ENCODE measurements at regions of chr16 and their contacts with region 1.

Region 1: DNA sequence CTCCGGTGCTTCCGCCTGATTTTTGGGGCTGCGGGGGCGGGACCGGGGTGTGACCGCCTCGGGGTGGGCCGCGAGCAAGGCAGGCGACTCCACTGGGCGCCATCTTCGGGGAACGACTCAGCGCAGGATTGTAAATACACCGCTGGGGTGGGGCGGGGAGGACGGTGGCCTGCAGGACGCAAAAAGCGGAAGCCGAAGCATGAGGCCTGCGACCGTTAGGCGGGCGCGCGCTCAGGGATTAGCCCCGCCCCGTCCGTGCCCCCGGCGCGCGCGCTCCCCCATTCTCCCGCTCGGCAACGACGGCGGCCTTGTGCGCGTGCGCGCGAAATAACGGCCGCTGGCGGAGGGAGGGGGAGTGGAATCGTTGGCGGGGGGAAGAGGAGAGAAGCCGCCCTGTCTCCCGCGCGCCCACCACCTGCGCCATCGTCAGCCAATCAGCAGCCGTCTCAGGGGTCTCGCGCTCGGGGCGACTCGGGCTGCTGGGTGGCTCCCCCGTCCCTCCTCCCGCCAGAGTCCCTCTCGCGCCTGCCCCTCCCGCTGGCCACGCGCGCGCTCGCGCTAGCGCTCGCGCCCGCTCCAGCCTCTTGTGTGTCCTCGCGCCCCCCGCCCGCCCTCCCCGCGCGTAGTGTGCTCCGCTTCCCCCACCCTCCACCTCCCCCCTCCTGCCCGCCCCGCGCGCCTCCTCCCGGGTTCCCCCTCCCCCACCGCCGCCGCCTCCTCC is 791 bp upstream of the MAZ start:
- DNase-seq: peak; percentile 97
- H3K4me3 ChIP-seq: peak overlapping the region; percentile 52 to 61 (median 58)
- H3K27ac ChIP-seq: peak overlapping the region; percentile 68
- H3K4me1 ChIP-seq: peaks cover 30% of the 10 kb centered on the region
- H3K27me3 ChIP-seq: no peaks in the 10 kb centered on the region
- CTCF ChIP-seq: no peak
- POLR2A ChIP-seq: peak; percentile 72

Region 2: GRCh38 chr16:29790183-29790952 is 15.2 kb before region 1 on chr16 and contains the start of gene KIF22:
- CTCF ChIA-PET with region 1: interaction called, 16 read pairs
- POLR2A ChIA-PET with region 1: interaction called, 9 read pairs
- dilution Hi-C with region 1: no loop called
- intact Hi-C with region 1: loop called (anchors 1 kb)
- DNase-seq: peak; percentile 99
- H3K4me3 ChIP-seq: peak within 1 kb of the TSS; percentile 80 to 93 (median 88)
- H3K27ac ChIP-seq: peak within 1 kb of the TSS; percentile 13
- H3K4me1 ChIP-seq: peaks cover 23% of the 10 kb centered on the region
- H3K27me3 ChIP-seq: no peaks in the 10 kb centered on the region
- CTCF ChIP-seq: peak; percentile 85 to 90
- POLR2A ChIP-seq: peak; percentile 70
- total RNA-seq, gene KIF22: 82.3 and 90.0 TPM in 2 replicates

Region 3: GRCh38 chr16:29973384-29974246 is 168.1 kb after region 1 on chr16 and contains the start of gene TAOK2:
- CTCF ChIA-PET with region 1: interaction called, 17 read pairs
- POLR2A ChIA-PET with region 1: no interaction called
- dilution Hi-C with region 1: no loop called
- intact Hi-C with region 1: loop called (anchors 5 kb)
- DNase-seq: peak; percentile 100
- H3K4me3 ChIP-seq: peak within 1 kb of the TSS; percentile 79 to 95 (median 94)
- H3K27ac ChIP-seq: peak within 1 kb of the TSS; percentile 81
- H3K4me1 ChIP-seq: peaks cover 38% of the 10 kb centered on the region
- H3K27me3 ChIP-seq: no peaks in the 10 kb centered on the region
- CTCF ChIP-seq: no peak
- POLR2A ChIP-seq: peak; percentile 89
- total RNA-seq, gene TAOK2: 112 and 114 TPM in 2 replicates

Region 4: DNA sequence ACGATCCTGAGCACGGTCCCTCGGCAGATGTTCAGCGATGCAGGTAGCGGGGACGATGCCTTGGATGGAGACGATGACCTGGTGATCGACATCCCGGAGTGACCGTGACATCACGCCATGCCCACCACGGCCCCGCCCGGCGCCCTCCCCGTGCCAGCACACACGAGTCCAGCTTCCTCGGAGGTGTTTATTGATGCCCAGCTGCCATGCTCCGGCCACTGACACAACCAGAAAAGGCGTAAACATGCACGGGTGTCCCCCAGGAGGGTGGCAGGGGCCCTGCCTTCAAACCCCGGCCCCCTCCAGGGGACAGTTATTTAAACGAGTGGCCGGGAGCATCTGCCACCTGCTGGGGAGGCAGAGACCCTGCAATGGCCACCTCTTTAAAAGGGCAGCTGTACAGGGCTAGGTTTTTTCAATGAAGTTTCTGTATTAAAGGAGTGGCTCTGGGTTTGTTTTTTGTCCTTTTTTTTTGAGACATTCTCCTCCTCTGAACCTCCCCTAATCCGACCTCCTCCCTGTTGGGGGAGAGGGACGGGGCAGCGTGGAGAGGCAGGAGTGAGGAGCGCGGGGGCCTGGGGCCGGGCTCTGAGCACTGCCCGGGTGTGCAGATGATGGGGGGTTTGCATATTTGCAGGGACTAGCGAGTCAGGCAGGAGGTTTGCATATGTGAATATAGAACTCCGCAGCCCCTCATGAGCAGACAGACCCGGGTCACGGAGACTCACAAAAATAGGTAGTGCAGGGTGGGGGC is 200.0 kb after region 1 on chr16:
- CTCF ChIA-PET with region 1: interaction called, 22 read pairs
- POLR2A ChIA-PET with region 1: no interaction called
- dilution Hi-C with region 1: no loop called
- intact Hi-C with region 1: no loop called
- DNase-seq: peak; percentile 11
- H3K4me3 ChIP-seq: no peak overlapping the region
- H3K27ac ChIP-seq: no peak overlapping the region
- H3K4me1 ChIP-seq: no peaks in the 10 kb centered on the region
- H3K27me3 ChIP-seq: peaks cover 9 to 12% of the 10 kb centered on the region in 2 experiments
- CTCF ChIP-seq: peak; percentile 73 to 88
- POLR2A ChIP-seq: no peak

Region 5: DNA sequence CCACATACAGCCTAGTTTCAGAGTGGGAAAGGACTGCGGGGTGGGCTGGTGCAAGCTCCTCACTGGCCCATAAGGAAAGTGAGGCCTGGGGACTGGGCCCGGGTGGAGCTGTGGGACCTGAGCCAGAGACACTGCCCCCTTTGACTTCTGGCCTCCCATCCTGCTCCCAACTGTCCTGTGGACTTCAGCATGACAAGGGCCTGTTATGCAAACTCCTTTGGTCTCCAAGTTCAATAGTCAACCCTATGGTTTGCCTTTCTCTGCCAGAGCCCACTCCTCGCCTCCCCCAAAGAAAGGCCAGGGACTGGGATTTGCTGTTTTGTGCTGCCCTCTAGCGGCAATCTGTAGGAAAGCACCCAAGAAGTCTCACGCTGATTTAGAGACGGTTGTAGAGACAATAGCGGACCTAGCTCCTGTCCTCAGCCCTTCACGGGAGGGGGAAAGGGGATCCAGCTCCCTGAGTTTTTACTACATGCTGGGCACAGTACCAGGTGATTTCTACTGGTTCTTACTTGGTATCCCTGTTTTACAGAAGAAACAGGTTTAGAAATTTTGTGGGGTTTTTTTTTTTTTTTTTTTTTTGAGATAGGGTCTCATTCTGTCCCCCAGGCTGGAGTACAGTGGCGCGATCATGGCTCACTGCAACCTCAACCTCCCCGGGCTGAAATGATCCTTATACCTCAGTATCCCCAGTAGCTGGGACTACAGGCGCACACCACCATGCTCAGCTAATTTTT is 226.7 kb after region 1 on chr16:
- CTCF ChIA-PET with region 1: interaction called, 10 read pairs
- POLR2A ChIA-PET with region 1: no interaction called
- dilution Hi-C with region 1: no loop called
- intact Hi-C with region 1: no loop called
- DNase-seq: peak; percentile 56
- H3K4me3 ChIP-seq: no peak overlapping the region
- H3K27ac ChIP-seq: no peak overlapping the region
- H3K4me1 ChIP-seq: no peaks in the 10 kb centered on the region
- H3K27me3 ChIP-seq: peaks cover 19 to 20% of the 10 kb centered on the region in 2 experiments
- CTCF ChIP-seq: peak; percentile 75 to 80
- POLR2A ChIP-seq: no peak

Region 6: GRCh38 chr16:30896889-30897733 is 1091.6 kb after region 1 on chr16:
- CTCF ChIA-PET with region 1: no interaction called
- POLR2A ChIA-PET with region 1: no interaction called
- dilution Hi-C with region 1: no loop called
- intact Hi-C with region 1: no loop called
- DNase-seq: peak; percentile 86
- H3K4me3 ChIP-seq: peak overlapping the region; percentile 24 to 44 (median 27)
- H3K27ac ChIP-seq: peak overlapping the region; percentile 69
- H3K4me1 ChIP-seq: peaks cover 17% of the 10 kb centered on the region
- H3K27me3 ChIP-seq: no peaks in the 10 kb centered on the region
- CTCF ChIP-seq: no peak
- POLR2A ChIP-seq: no peak